ENCODE measurements at regions of chr22 and their contacts with region 1.

Region 1: GRCh38 chr22:25048659-25049647 is 96.4 kb downstream of the KIAA1671 start:
- DNase-seq: peak; percentile 37
- ATAC-seq: peak; percentile 57
- H3K4me3 Mint-ChIP-seq: no peak overlapping the region
- H3K27ac Mint-ChIP-seq: no peak overlapping the region
- H3K4me1 Mint-ChIP-seq: no peaks in the 10 kb centered on the region
- H3K27me3 Mint-ChIP-seq: peaks cover 5% of the 10 kb centered on the region
- CTCF ChIP-seq: peak; percentile 34

Region 2: GRCh38 chr22:24951942-24952836 is 96.8 kb before region 1 on chr22 and contains the start of gene KIAA1671:
- CTCF ChIA-PET with region 1: no interaction called
- POLR2A ChIA-PET with region 1: no interaction called
- intact Hi-C with region 1: loop called (anchors 1 kb)
- DNase-seq: peak; percentile 73
- ATAC-seq: peak; percentile 90
- H3K4me3 Mint-ChIP-seq: peak within 1 kb of the TSS; percentile 68
- H3K27ac Mint-ChIP-seq: no peak within 1 kb of the TSS
- H3K4me1 Mint-ChIP-seq: peaks cover 14% of the 10 kb centered on the region
- H3K27me3 Mint-ChIP-seq: peaks cover 72% of the 10 kb centered on the region
- CTCF ChIP-seq: no peak
- total RNA-seq, gene KIAA1671: 0.02 and 0.04 TPM in 2 replicates